ENCODE measurements at regions of chr6 and their contacts with region 1.

Region 1: DNA sequence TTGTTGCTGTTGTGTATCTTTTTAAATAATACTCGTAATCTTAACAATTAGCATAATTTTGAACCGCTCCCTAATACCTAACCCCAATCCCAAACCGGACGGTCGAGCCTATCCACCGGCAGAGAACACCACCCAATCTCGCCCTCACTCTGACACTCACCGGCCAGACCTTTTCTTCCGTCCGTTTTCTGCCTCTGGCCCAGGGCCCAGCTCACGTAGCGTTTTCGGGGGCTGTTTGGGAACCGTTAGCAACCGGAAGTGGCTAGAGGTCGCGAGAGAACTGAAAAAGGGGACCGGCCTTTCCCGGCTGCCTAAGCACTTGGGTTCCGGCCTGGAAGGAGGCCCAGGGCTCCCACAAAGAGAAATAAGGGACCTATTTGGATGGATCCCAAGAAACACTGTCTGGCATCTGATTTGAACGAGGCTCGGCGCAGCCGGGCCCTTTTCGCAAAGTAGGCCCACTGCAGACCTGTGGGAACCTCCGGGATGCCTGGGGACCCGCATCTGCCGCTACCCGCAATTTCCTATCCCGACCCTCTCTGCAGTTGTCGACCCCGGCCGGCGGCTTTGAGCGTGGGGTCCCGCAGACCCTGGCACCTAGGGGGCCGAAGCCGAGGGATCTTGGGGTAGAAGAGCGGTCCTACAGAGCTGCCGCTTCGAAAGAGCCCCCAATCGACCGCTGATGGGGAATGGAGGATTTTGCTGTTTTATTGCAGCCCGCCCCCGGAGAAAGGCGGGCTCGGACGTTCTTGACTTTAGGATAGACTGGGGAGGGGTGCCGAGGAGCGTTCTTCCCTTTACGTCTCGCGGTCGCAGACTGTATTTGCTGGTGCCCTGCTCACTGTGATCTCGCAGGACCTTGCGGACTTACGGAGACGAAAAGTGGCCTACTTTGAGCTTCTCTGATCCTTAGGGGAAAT is 4.8 kb upstream of the ZKSCAN8 start:
- DNase-seq: peak; percentile 80 to 98 (median 86)

Region 2: DNA sequence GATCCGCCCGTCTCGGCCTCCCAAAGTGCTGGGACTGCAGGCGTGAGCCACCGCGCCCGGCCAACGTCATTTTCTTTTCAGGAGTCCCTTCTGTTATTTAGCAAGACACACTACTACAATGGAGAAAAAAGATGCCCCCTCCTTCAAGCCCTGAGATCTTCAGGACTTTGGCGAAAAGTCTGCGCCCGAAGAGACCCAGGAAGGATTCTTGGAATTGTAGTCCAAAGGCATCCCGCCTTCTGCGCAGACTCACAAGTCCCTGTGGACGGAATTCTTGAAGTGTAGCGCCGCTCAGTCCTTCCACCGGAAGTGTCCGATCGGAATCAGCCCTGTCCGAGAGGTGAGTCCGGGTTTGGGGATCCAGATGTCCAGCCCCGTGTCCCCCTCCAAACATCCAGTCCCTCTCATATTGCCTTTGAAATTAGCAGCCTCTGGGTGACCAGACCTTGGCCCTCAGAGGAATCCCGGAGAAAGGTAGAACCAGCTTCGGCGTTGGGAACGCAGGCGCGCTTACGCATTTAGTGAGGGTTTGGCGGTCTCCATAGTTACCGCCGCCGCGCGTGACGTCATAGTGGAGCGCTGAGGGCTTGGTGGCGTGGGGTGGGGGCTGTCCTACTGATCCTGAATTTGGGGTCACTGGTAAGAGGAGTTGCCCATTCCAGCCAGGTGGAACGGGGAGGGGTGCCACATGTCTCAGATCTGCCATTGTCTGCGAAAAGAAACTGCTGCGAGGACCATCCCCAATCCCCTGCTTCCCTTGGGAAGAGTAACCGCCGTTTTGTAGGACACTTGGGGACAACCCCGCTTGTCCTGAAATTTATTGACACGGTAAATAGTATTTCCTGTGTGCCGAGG is 56.0 kb before region 1 on chr6:
- intact Hi-C with region 1: loop called (anchors 10 kb)
- DNase-seq: peak; percentile 87 to 98 (median 92)

Region 3: DNA sequence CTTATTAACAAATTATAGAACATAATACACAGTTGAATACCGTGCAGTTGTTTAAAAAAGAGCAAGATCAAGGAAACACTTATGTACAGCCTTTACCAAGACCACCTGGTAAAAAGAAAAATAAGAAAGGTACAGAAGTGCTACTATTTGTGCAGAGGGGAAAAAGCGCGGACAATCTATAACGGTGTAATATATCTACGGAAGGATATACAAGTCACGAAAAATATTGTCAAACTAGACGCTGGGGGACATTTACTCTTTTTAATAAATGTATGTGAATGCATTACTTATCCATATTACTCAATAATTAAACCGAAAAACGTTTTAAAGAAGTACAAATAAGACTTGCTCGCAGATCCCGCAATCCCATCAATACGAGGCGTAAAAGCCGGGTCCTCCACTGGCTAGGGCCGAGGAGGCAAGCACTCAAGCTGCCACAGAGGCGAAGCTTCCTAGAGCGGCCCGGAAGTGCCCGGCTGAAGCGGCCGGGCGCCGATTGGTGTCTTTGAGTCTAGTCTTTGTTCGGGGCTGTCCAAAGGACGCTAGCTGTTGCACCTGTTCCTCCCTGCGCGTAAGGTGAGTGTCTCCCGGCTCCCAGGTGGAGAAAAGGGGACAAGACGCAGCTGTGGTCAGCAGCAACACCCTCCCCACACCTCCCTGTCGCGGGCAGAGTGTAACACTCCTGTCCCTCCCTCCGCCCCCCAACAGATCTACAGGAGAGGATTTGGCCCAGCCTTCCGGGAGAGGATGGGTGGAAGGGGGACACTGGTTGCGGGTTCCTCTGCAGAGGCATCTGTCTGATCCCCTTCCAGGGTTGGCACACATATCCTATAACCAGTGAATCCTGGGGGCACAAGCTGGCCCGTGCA is 12.5 kb before region 1 on chr6 and contains the start of gene ZSCAN16:
- intact Hi-C with region 1: loop called (anchors 1 kb)
- DNase-seq: peak; percentile 74 to 97 (median 86)

Region 4: GRCh38 chr6:28225056-28225834 is 88.4 kb after region 1 on chr6 and contains the start of gene ZSCAN9:
- intact Hi-C with region 1: loop called (anchors 10 kb)
- DNase-seq: peak; percentile 57 to 96 (median 74)

Region 5: DNA sequence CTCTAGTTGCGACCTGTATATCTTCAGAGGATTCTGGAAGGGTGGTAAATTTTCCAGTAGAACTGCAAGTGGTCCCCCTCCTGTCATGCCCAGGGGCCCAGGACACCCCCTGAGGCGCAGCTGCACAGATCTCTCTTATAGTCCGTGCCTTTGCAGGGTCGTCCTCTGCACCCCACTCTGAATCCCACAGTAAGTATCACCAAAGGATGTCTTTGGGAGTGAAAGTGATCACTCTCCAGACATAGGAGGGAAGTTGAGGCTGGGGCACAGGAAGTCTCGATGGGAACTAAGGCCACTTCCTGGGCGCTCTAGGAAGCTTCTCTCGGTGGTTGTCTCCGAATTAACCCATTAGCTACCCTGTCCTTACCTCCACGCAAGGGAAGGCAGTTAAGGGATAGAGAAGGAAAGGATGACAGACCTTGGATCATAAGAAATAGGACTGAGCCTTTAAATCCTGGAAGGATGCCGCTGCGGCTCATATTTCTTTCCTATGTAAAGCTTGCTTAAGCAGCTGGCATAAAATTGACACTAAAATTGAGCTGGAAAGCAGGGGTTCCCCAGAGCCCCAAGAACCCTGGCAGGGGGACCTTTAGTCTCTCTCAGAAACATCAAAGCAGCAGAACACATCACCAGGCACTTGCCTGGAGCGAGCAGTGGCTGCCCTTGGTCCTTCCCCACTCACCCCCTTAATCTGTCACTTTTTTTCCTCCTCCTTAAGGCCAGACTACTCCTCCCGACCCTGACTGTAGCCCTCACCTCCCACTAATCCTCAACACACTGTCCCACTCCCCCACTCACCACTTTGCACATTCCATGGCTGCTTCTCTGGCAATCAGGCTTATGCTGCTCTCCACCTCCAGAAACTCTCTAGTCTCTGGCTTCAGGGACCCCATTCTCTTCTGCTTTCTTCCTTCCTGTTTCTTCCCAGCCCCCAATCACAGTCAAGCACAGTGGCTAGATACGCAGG is 115.4 kb after region 1 on chr6 and contains the start of gene ZKSCAN4:
- intact Hi-C with region 1: loop called (anchors 10 kb)
- DNase-seq: peak; percentile 63 to 96 (median 76)

Region 6: DNA sequence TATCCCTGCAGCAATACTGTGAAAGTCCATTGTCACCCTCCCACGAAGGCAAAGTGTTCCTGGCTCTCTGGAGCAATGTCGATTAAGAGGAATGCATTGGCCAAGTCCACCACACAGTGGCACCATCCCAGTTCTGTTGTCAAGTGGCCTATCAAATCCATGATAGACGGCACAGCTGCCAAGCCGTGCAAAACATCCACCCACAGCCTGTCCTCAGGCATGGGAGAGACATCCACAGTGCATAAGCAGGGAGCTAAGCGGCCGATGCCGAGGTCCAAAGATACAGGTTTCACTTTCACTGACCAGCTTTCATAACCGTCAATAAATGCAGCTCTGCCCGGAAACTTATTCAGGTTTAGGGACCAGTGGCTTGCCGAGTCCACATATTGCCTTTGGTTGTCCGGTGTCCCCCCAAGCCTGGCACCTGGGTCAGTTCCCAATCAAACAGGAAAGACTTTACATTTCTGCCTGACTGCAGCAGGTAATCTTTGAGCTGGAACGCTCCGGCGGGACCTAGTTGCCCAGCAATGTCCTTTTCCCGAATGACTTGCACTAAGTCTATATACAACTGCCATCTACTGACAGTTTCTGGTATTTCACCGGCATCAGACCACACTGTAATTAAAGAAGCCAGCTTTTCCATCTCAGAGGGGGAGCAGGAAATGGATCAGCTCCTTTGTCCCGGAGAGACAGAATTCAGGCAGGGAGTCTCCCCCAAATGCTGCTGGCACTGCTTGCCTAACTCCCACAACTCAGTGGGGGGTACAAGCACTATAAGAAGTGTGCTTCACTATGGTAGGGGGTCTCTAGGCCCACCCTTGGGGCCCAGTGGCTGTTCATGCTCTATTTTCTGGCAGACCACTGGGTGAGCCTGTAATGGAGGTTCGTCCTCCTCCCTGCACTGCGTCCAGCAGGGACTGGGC is 219.2 kb after region 1 on chr6:
- intact Hi-C with region 1: loop called (anchors 2 kb)
- DNase-seq: peak; percentile 49 to 95 (median 68)

Region 7: GRCh38 chr6:29649701-29650673 is 1513.1 kb after region 1 on chr6:
- intact Hi-C with region 1: no loop called
- DNase-seq: peak; percentile 96 to 100 (median 99)

Measured in posterior cingulate gyrus (tissue), 11 donors.